ENCODE measurements at regions of chr10 and their contacts with region 1.

Region 1: DNA sequence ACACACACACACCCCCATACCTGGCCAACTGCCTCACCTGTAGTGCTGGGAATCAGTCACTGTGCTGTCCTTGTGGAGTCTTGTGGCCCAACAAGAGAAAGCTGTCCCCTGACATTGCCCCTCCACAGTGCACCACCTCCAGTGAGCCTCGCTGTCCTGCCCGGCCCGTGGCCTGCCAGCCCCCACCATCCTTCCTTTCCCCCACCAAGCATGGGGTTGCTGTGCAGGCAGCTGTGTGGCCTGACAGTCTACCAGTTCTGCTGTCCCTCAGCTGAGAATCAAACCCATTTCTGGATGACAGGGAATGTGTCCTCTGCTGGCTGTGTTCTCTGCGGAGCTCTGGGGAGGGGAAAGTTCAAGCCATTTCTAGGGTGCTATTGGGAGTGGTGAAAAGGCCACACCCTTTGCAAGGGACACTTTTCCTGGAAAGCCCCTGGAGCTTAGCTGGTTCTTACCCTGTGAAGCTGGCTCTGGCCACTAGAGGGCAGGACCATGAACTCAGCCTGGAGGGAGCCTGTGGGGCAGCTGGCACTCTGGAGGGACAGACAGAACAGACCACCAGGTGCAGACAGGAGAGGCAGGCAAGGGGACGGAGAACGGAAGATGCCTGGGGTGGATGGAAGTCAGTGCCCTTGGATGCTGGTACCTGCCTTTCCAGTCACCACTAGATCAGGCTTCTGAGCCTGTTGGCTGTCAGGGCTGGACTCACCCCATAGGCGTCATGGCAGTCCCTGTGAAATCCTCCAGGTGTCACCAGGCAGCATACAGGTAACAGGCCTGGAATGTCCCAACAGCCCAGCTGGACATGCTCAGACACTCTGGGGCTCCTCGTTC is 10.5 kb upstream of the MTPAP start:
- H3K4me3 ChIP-seq: no peak overlapping the region
- H3K27ac ChIP-seq: no peak overlapping the region
- H3K4me1 ChIP-seq: no peaks in the 10 kb centered on the region
- CTCF ChIP-seq: peak; percentile 60

Region 2: DNA sequence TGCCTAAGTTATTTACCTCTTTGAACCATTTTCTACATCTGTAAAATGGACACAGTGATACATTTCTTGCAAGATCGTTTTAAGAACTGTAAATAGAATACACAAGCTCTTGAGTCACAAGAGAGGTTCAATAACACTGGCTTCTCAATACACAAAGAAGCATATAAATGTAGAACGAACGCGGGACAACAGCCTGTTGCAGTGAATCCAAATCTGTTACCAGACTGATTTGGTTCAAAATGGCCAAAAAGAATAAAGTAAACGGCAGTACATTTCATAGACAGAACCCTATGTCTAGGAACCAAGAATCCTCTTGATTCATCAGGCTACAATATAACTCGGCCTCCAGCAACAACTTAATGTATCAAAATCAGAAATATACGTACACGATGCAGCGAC is 11.2 kb before region 1 on chr10:
- CTCF ChIA-PET with region 1: interaction called, 33 read pairs
- POLR2A ChIA-PET with region 1: interaction called, 3 read pairs
- H3K4me3 ChIP-seq: peak overlapping the region; percentile 71
- H3K27ac ChIP-seq: peak overlapping the region; percentile 83; the same call in 1 of the 2 replicates
- H3K4me1 ChIP-seq: peaks cover 5% of the 10 kb centered on the region; the same call in 1 of the 2 replicates
- CTCF ChIP-seq: no peak

Region 3: DNA sequence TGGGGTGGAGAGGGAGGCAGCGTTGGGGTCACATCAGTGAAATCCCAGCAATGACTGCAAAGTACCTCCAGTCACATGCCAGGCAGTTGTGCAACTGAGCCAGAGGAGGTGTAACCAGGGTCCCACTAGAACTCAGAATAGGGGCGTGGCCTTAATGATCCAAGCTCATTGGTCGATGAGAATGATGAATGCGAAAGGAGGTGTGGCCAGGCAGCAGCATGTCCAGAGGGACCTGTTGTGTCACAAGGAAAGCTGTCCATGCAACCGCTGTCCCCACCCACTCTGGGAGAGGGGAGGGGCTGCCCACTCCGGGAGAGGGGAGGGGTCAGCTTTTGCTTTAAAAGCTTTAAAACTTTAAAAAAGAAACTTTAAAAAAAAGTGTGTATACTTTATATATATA is 14.8 kb after region 1 on chr10:
- CTCF ChIA-PET with region 1: interaction called, 10 read pairs
- POLR2A ChIA-PET with region 1: no interaction called
- H3K4me3 ChIP-seq: no peak overlapping the region
- H3K27ac ChIP-seq: no peak overlapping the region
- H3K4me1 ChIP-seq: peaks cover 6% of the 10 kb centered on the region
- CTCF ChIP-seq: no peak